Esophagus squamous epithelium (tissue), 5 donors: ENCODE measurements at regions of chr1 and their contacts with region 1.

Region 1: GRCh38 chr1:54800899-54801759 is at the start of gene TTC22:
- DNase-seq: no peak
- H3K4me3 ChIP-seq: peak within 1 kb of the TSS; percentile 52 to 65 (median 60)
- H3K27ac ChIP-seq: peak within 1 kb of the TSS; percentile 83 to 94 (median 92)
- H3K4me1 ChIP-seq: peaks cover 13 to 99% (median 23%) of the 10 kb centered on the region in 3 donors
- H3K27me3 ChIP-seq: peaks cover 0 to 35% (median 2%) of the 10 kb centered on the region in 4 donors
- CTCF ChIP-seq: peak; percentile 45 to 82 (median 58)
- POLR2A ChIP-seq: peak in 1 of 4 donors; percentile 67
- total RNA-seq, gene TTC22: 73.4 to 323 (median 141) TPM

Region 2: DNA sequence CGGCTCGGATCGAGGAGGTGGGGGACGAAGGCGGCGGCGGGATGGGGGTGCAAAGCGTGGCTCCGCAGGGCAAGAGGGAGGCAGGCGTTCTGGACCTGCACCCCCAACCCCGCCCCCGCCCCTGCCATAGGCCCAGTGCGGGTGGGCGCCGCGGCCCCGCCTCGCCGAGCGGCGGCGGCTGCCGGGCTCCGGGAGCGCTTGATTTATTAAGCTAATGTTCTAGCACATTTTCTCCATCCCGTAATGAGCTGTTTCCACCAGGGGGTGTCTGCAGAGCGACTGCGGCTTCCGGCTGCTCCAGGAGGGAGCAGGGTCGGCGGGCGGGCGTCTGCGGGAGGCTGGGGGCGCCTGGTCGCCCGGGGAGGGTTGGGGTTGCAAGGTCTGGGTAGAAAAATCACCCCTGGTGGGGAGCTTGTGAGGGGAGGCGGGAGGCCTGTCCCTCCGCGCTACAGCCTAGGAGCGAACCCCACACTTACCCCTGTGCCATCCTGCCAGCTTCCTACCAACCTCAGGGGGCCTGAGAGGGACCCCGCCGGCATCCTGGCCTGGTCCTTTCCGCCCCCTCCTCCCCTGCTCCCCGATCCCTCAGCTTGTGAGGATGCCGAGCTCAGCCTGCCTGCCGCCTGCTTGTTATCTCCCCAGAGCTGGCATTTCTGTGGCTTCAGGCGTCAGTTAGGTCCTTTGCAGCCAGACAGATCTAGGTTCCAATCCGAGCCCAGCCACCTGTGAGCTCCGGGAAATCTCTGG is 301.6 kb before region 1 on chr1:
- intact Hi-C with region 1: loop called (anchors 10 kb)
- DNase-seq: no peak
- H3K4me3 ChIP-seq: peak overlapping the region; percentile 17 to 61 (median 42)
- H3K27ac ChIP-seq: no peak overlapping the region
- H3K4me1 ChIP-seq: peaks cover 11 to 17% (median 15%) of the 10 kb centered on the region in 3 donors
- H3K27me3 ChIP-seq: peaks cover 0 to 54% (median 0%) of the 10 kb centered on the region in 4 donors
- CTCF ChIP-seq: peak in 4 of 6 experiments; percentile 22 to 58 (median 46)
- POLR2A ChIP-seq: no peak

Region 3: DNA sequence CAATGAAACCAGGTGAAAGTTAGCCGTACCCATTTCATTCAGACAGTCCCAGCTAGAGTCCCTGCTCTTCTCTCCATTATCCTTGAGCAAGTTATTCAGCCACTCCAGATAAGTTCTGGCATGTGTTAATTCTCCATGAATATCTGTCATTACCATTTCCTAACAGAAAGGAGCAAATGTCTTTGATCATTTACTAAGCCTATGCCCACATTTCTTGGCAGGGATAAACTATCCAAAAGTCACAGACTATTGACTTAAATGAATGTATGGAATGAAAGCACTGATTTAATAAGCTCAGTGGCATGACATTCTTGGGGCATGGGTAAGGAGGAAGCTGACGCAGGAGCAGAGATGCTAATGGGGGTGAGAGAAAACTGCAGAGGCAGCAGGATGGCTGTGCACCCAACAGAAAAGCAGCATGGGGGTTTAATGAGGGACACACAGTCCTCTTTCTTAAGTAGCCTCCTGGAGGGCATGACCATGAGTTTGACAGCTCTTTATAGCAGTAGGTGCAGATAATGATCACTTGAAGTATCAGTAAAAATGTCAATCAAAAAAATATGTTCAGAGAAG is 103.4 kb after region 1 on chr1:
- intact Hi-C with region 1: no loop called
- DNase-seq: no peak
- H3K4me3 ChIP-seq: no peak overlapping the region
- H3K27ac ChIP-seq: peak overlapping the region; percentile 17 to 69 (median 43)
- H3K4me1 ChIP-seq: peaks cover 0 to 34% (median 5%) of the 10 kb centered on the region in 3 donors
- H3K27me3 ChIP-seq: no peaks in the 10 kb centered on the region
- CTCF ChIP-seq: no peak
- POLR2A ChIP-seq: no peak